ENCODE measurements at regions of chr2 and their contacts with region 1.

Region 1: DNA sequence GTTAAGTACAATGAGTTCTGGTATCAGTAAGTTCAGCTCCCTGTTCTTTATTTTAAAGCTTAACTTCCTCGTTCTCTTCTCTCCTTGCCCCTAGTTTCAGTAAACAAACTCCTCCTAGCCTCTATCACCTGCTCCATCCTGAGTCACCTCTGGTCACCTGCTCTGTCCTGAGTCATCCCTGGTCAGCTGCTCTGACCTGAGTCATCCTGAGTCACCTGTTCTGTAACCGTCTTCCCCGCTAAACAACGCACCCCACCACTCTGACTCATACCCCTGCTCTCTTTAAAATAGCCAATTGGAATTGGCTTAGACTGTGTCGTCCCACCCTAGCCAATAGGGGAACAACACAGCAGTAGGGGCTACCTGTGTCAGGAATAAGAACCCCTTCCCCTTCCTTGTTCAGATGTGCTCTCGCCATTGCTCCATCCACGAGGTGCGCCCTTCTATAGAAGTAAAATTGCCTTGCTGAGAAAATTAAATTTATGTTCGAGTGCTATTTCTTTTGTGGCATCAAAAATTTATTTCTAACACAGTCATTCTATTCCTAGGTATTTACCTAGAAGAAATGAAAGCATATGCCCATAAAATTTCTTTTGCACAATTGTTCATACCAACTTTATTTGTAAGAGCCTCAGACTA is 24.9 kb upstream of the RMND5A start:
- DNase-seq: no peak
- ATAC-seq: no peak
- H3K4me3 ChIP-seq: no peak overlapping the region
- H3K27ac ChIP-seq: no peak overlapping the region
- H3K4me1 ChIP-seq: peaks cover 0 to 11% (median 0%) of the 10 kb centered on the region in 12 donors
- H3K27me3 ChIP-seq: no peaks in the 10 kb centered on the region
- CTCF ChIP-seq: no peak
- POLR2A ChIP-seq: no peak

Region 2: GRCh38 chr2:86750240-86750839 is 55.2 kb after region 1 on chr2:
- intact Hi-C with region 1: loop called in 1 of 10 experiments (anchors 10 kb)
- DNase-seq: no peak
- ATAC-seq: no peak
- H3K4me3 ChIP-seq: no peak overlapping the region
- H3K27ac ChIP-seq: no peak overlapping the region
- H3K4me1 ChIP-seq: peaks cover 0 to 46% (median 17%) of the 10 kb centered on the region in 12 donors
- H3K27me3 ChIP-seq: no peaks in the 10 kb centered on the region
- CTCF ChIP-seq: no peak
- POLR2A ChIP-seq: no peak